ENCODE measurements at regions of chr3 and their contacts with region 1.

Region 1: DNA sequence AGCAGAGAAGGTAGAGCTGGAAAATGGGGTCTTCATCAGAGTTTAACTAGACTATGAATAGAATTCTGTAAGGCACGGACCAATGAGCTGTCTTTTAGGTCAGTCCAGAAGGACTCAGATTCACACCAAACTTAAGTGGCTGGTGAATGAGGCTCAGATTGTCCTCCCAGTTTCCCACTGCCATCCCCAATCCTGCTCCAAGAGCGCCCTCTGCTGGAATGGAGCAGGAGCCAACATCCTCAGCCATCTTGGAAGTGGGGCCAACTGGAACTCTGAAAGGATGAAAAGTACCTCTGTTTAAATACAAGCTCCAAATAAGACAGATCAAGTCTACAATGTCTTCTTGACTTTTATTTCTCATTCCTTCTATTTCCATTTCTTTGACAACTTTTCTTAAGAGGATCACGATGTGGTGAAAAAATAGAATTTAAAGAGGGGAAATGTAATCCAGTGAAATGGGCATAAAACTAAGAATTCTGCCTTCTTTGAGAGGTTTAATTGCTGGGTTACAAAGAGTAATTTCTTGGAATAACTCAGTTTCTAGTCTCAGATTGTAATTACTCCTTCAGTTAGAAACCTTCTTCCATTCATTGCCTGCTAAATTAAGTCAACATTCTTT is 217.1 kb upstream of the TPRG1 start:
- DNase-seq: peak; percentile 9
- H3K4me3 ChIP-seq: no peak overlapping the region
- H3K27ac ChIP-seq: peak overlapping the region in 2 of 4 donors; percentile 5 to 66
- H3K4me1 ChIP-seq: peaks cover 20 to 51% (median 26%) of the 10 kb centered on the region in 3 donors
- H3K27me3 ChIP-seq: no peaks in the 10 kb centered on the region
- CTCF ChIP-seq: peak; percentile 88 to 98 (median 95)
- POLR2A ChIP-seq: no peak

Region 2: DNA sequence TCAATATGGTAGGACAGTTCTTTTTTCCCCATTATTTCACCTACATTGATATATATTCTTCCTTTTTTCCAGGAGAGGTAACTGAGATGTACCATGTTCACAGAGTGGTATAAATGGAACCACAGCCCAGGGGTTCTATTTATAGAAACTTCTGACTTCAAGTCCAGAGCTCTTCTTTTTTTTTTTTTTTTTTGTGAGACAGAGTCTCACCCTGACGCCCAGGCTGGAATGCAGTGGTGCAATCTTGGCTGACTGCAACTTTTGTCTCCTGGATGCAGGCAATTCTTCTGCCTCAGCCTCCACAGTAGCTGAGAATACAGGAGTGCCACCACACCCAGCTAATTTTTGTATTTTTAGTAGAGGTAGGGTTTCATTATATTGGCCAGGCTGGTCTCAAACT is 50.0 kb before region 1 on chr3:
- intact Hi-C with region 1: no loop called
- DNase-seq: no peak
- H3K4me3 ChIP-seq: no peak overlapping the region
- H3K27ac ChIP-seq: no peak overlapping the region
- H3K4me1 ChIP-seq: peaks cover 3 to 37% (median 21%) of the 10 kb centered on the region in 3 donors
- H3K27me3 ChIP-seq: no peaks in the 10 kb centered on the region
- CTCF ChIP-seq: no peak
- POLR2A ChIP-seq: no peak

Region 3: DNA sequence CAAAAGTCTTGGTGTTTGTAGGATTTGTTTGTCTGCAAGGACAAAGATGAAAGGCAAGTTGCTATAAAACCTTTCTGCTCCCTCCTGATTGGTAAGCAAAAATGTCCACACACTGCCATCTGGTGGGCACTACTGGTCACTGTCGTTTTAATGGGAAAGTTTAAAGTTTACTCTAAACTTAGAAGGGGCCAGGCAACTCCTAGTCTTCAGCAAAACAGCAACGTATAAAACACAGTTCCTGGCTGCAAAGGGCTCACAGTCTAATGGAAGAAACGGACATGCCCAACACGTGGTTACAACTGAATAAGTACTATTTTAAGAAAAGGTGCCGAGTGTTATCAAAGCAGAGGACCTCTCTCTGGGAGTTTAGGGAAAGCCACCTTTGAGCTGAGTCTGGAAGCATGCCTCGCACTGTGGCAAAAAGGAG is 193.4 kb after region 1 on chr3:
- intact Hi-C with region 1: loop called (anchors 5 kb)
- DNase-seq: no peak
- H3K4me3 ChIP-seq: no peak overlapping the region
- H3K27ac ChIP-seq: no peak overlapping the region
- H3K4me1 ChIP-seq: peaks cover 0 to 21% (median 7%) of the 10 kb centered on the region in 3 donors
- H3K27me3 ChIP-seq: no peaks in the 10 kb centered on the region
- CTCF ChIP-seq: peak; percentile 48 to 88 (median 81)
- POLR2A ChIP-seq: no peak

Measured in esophagus squamous epithelium (tissue), 5 donors.